ENCODE measurements at regions of chr6 and their contacts with region 1.

Region 1: GRCh38 chr6:63516186-63516944 is 55.9 kb upstream of the LOC128125822 start:
- DNase-seq: peak; percentile 82
- H3K4me3 Mint-ChIP-seq: no peak overlapping the region
- H3K27ac Mint-ChIP-seq: no peak overlapping the region
- H3K4me1 Mint-ChIP-seq: peaks cover 17% of the 10 kb centered on the region
- H3K27me3 Mint-ChIP-seq: no peaks in the 10 kb centered on the region
- CTCF ChIP-seq: no peak

Region 2: DNA sequence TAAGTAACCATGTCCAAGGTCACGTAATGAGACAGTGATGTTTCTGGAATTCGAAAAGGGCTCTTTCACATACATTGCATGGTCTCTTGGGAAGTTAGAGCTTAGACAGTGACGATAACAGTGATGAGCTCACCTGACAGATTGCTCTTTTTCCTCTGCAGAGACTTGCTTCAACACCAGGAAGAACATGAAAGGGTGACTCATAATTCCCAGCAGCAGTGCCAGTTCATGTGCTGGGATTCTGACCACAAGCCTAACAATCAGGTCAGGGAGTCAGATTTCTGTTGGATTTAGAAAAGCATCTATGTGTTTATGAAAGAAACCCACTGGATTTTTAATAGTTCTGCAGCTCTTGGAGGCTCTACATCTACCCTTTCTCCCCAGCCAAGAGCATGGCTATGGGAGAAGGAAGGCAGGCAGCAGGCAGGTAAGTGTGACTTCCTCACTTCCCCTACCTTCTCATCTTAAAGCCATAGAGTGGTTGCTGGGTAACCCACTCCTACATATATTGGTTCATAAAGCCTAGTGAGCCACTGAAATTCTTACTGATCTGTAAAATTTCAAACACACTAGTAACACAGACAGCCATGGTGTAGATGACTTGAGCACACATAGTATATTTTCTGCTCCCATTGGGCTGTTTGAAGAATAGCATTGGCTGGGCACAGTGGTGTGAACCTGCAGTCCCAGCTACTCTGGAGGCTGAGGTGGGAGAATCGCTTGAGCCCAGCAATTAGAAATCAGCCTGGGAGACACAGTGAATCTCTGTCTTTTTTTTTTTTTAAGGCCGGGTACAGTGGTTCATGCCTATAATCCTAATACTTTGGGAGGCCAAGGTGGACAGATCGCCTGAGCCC is 11.5 kb after region 1 on chr6:
- CTCF ChIA-PET with region 1: interaction called, 4 read pairs
- POLR2A ChIA-PET with region 1: interaction called, 15 read pairs
- intact Hi-C with region 1: no loop called
- DNase-seq: peak; percentile 98
- H3K4me3 Mint-ChIP-seq: peak overlapping the region; percentile 33
- H3K27ac Mint-ChIP-seq: peak overlapping the region; percentile 84
- H3K4me1 Mint-ChIP-seq: peaks cover 26% of the 10 kb centered on the region
- H3K27me3 Mint-ChIP-seq: no peaks in the 10 kb centered on the region
- CTCF ChIP-seq: no peak

Measured in MCF 10A (cell line).